ENCODE measurements at regions of chr1 and their contacts with region 1.

Region 1: GRCh38 chr1:157969697-157970485 is 23.6 kb upstream of the KIRREL1 start:
- DNase-seq: peak; percentile 41
- ATAC-seq: peak; percentile 93
- H3K4me3 ChIP-seq: no peak overlapping the region
- H3K27ac ChIP-seq: no peak overlapping the region
- H3K4me1 ChIP-seq: no peaks in the 10 kb centered on the region
- H3K27me3 ChIP-seq: no peaks in the 10 kb centered on the region
- CTCF ChIP-seq: peak; percentile 88 to 93 (median 89)
- POLR2A ChIP-seq: no peak
- RAD21 ChIP-seq: peak; percentile 80

Region 2: DNA sequence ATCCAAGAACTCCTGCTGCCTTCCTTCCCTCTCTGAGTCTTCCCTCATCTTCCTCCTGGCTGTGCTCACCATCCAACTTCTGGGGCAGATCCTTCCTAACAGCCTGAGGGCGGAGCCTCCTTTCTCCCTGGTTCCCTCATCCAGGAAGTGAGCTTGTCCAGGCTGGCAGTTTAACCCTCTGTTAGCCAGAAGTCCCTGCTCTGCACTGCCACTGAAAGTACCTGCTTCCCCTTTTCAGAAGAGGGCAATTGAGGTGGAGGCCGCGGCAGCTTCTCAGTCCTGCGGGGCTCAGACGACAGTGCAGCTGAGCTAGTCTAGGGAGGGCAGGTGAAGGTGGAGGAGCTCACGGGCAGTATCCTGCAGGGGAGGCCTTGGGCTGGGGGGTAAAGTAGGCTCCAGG is 566.7 kb before region 1 on chr1:
- CTCF ChIA-PET with region 1: no interaction called
- POLR2A ChIA-PET with region 1: no interaction called
- RAD21 ChIA-PET with region 1: no interaction called
- intact Hi-C with region 1: no loop called
- DNase-seq: peak; percentile 3
- ATAC-seq: peak; percentile 87
- H3K4me3 ChIP-seq: no peak overlapping the region
- H3K27ac ChIP-seq: no peak overlapping the region; the same call in 1 of the 2 replicates
- H3K4me1 ChIP-seq: 0 out of 4 replicates have a peak, but pooled peaks cover 0 to 7% of the 10 kb centered on the region in 2 experiments
- H3K27me3 ChIP-seq: no peaks in the 10 kb centered on the region
- CTCF ChIP-seq: no peak
- POLR2A ChIP-seq: no peak
- RAD21 ChIP-seq: no peak

Region 3: DNA sequence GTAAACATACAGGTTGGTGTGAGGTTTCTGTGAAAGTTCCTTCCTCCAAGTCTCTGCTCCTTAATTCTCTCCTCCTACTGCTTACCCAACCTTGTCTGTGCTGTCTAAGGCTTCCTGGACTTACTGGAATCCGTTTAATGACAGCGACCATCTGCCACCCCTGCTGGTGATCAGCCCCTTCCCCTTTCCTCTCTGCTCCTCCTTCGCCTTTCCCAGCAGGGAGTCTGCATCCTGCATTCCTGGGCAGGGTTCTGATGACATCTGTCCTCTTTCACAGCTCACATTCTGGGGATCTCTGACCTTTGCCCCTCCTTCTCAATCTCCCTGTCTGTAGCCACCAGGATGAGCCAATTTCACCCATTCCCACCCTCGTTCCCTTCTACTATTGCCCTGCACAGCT is 90.1 kb after region 1 on chr1:
- CTCF ChIA-PET with region 1: no interaction called
- POLR2A ChIA-PET with region 1: no interaction called
- RAD21 ChIA-PET with region 1: no interaction called
- intact Hi-C with region 1: no loop called
- DNase-seq: no peak
- ATAC-seq: no peak
- H3K4me3 ChIP-seq: no peak overlapping the region
- H3K27ac ChIP-seq: no peak overlapping the region
- H3K4me1 ChIP-seq: no peaks in the 10 kb centered on the region
- H3K27me3 ChIP-seq: no peaks in the 10 kb centered on the region
- CTCF ChIP-seq: no peak
- POLR2A ChIP-seq: no peak
- RAD21 ChIP-seq: no peak

Region 4: GRCh38 chr1:158087320-158087927 is 117.5 kb after region 1 on chr1:
- CTCF ChIA-PET with region 1: interaction called, 7 read pairs
- POLR2A ChIA-PET with region 1: no interaction called
- RAD21 ChIA-PET with region 1: interaction called in 1 of 2 experiments, 3 read pairs
- intact Hi-C with region 1: loop called (anchors 1 kb)
- DNase-seq: peak; percentile 70
- ATAC-seq: peak; percentile 96
- H3K4me3 ChIP-seq: no peak overlapping the region
- H3K27ac ChIP-seq: no peak overlapping the region
- H3K4me1 ChIP-seq: no peaks in the 10 kb centered on the region
- H3K27me3 ChIP-seq: no peaks in the 10 kb centered on the region
- CTCF ChIP-seq: peak; percentile 95 to 98 (median 97)
- POLR2A ChIP-seq: no peak
- RAD21 ChIP-seq: peak; percentile 90

Measured in HCT116 (cell line).